Activated CD4-positive, alpha-beta T cell treated with anti-CD3 and anti-CD28 coated beads for 36 hours (primary cell): ENCODE measurements at regions of chr7 and their contacts with region 1.

Region 1: GRCh38 chr7:44885394-44886317 is at the start of gene PURB:
- DNase-seq: peak; percentile 98
- ATAC-seq: peak; percentile 97
- H3K4me3 Mint-ChIP-seq: peak within 1 kb of the TSS; percentile 86
- H3K27ac Mint-ChIP-seq: peak within 1 kb of the TSS; percentile 98
- H3K4me1 Mint-ChIP-seq: peaks cover 51% of the 10 kb centered on the region
- H3K27me3 Mint-ChIP-seq: no peaks in the 10 kb centered on the region
- total RNA-seq, gene PURB: 18.8 to 20.8 TPM

Region 2: GRCh38 chr7:44581879-44582603 is 303.6 kb before region 1 on chr7 and contains the start of gene TMED4:
- CTCF ChIA-PET with region 1: no interaction called
- POLR2A ChIA-PET with region 1: interaction called, 5 read pairs
- intact Hi-C with region 1: loop called in 1 of 2 experiments (anchors 1 kb)
- DNase-seq: peak; percentile 100
- ATAC-seq: peak; percentile 95
- H3K4me3 Mint-ChIP-seq: peak within 1 kb of the TSS; percentile 85
- H3K27ac Mint-ChIP-seq: peak within 1 kb of the TSS; percentile 92
- H3K4me1 Mint-ChIP-seq: peaks cover 33% of the 10 kb centered on the region
- H3K27me3 Mint-ChIP-seq: no peaks in the 10 kb centered on the region
- total RNA-seq, gene TMED4: 71.6 to 73.0 TPM

Region 3: DNA sequence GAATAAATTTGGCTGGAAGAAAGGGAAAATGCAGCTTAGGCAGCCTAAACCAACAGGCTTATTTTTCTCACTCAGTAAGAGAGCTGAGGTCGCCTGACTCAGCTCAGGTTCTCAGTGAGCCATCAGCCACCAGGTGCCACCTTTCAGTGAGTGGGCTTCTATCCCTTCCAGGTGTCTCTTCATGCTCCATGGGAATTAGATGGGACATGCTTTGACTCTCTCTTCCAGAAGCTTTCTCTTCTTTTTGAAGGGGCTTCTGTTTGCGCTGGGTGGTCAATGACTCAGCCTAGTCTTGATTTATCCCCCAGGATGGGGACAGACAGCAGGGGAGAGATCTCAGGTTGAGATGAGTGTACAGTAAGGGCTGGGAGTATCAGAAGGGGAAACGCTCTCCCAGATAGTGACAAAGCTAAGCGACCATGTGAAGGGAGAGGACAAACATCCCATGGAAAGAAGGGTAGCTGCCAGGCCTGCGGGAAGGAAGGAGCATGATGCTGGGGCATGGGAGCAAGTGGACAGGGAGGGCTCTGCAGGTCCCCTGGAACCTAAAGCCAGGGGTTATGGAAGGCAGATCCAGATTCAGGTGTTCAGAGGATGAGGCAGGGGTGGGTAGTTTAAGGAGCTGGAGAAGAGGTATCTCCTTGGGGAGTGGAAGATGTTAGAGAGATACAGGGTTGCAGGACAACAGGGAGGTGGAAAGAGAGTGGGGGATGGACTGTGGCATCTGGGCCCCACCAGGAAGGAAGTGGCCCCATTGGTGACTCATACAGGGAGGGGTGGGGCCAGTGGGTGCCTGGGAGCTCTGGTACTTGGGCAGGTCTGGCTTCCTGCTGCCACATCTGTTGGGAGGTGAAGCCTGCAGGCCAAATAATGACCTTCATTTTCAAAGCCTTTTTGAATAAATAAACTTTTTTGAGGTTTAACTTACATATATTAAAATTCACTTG is 246.8 kb before region 1 on chr7:
- CTCF ChIA-PET with region 1: no interaction called
- POLR2A ChIA-PET with region 1: no interaction called
- intact Hi-C with region 1: loop called in 1 of 2 experiments (anchors 1 kb)
- DNase-seq: peak; percentile 90
- ATAC-seq: peak; percentile 71
- H3K4me3 Mint-ChIP-seq: peak overlapping the region; percentile 73
- H3K27ac Mint-ChIP-seq: peak overlapping the region; percentile 100
- H3K4me1 Mint-ChIP-seq: peaks cover 75% of the 10 kb centered on the region
- H3K27me3 Mint-ChIP-seq: no peaks in the 10 kb centered on the region

Region 4: GRCh38 chr7:44858161-44858560 is 27.5 kb before region 1 on chr7:
- CTCF ChIA-PET with region 1: interaction called, 38 read pairs
- POLR2A ChIA-PET with region 1: interaction called, 11 read pairs
- intact Hi-C with region 1: loop called (anchors 1 to 2 kb)
- DNase-seq: no peak
- ATAC-seq: no peak
- H3K4me3 Mint-ChIP-seq: no peak overlapping the region
- H3K27ac Mint-ChIP-seq: no peak overlapping the region
- H3K4me1 Mint-ChIP-seq: peaks cover 18% of the 10 kb centered on the region
- H3K27me3 Mint-ChIP-seq: no peaks in the 10 kb centered on the region

Region 5: GRCh38 chr7:44921607-44922359 is 36.1 kb after region 1 on chr7:
- CTCF ChIA-PET with region 1: interaction called, 20 read pairs
- POLR2A ChIA-PET with region 1: no interaction called
- intact Hi-C with region 1: loop called (anchors 1 kb)
- DNase-seq: peak; percentile 99
- ATAC-seq: peak; percentile 99
- H3K4me3 Mint-ChIP-seq: no peak overlapping the region
- H3K27ac Mint-ChIP-seq: peak overlapping the region; percentile 47
- H3K4me1 Mint-ChIP-seq: peaks cover 15% of the 10 kb centered on the region
- H3K27me3 Mint-ChIP-seq: peaks cover under 1% of the 10 kb centered on the region

Region 6: DNA sequence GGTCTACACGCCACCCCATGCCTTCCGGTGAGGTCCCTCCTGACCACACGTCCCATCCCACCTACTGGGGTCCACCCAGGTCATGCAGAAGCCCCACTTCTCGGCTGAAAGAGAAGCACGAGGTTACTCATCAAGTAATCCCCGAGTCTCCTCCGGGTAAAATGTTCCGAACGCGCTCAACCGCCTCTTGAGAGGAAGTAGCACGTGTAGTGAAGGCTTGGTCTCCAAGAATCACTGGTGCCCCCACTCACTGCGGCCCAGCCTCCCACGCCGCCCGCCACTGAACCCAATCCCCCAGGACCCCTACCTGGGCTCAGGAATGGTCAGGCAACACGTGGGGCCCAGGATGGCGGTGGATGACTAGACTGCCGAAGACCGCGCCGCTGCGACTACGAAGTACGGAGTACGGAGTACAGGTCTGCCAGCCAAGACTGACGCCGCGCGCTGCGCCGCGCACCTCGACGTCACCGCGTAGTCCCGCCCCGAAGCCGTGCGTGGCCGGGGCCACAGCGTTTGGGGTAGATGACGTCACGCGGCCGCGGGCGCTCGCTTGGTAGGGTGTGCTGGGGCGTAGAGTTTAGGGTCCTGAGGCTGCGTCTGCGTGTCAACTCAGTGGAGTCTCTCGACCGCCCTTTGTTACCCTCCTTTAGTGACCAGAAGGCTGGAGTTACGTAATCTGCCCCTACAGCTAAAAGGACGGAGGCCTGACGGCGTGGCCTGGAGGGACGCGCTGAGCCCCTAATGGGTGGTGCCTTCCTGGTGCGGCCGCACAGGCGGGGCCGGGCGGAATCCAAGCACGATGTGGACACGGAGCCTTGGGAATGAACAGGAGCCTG is 100.8 kb after region 1 on chr7:
- CTCF ChIA-PET with region 1: no interaction called
- POLR2A ChIA-PET with region 1: no interaction called
- intact Hi-C with region 1: loop called in 1 of 2 experiments (anchors 1 kb)
- DNase-seq: peak; percentile 99
- ATAC-seq: peak; percentile 90
- H3K4me3 Mint-ChIP-seq: peak overlapping the region; percentile 99
- H3K27ac Mint-ChIP-seq: peak overlapping the region; percentile 99
- H3K4me1 Mint-ChIP-seq: peaks cover 52% of the 10 kb centered on the region
- H3K27me3 Mint-ChIP-seq: no peaks in the 10 kb centered on the region

Region 7: DNA sequence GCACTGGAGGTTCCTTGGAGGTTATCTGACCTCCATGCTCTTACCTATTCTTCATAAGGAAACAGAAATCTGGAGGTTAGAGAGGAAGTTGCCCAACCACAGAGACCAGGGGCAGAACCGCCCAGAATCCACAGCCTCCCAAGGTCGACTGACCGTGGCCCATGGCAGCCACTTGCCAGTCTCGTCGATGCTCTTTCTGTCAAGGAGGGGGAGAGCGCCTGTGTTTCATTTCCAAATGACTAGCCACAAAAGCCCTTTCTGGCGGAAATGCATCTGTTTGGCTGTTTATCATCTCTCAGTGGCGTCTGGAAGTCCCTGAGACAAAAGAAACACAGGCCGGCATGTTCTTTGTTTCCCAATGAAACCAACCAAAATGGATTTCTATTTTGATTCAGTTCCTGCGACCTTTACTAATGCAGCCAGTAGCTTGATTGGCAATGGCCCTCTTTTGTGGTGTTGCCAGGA is 274.8 kb after region 1 on chr7:
- CTCF ChIA-PET with region 1: no interaction called
- POLR2A ChIA-PET with region 1: no interaction called
- intact Hi-C with region 1: no loop called
- DNase-seq: no peak
- ATAC-seq: peak; percentile 16
- H3K4me3 Mint-ChIP-seq: no peak overlapping the region
- H3K27ac Mint-ChIP-seq: no peak overlapping the region
- H3K4me1 Mint-ChIP-seq: no peaks in the 10 kb centered on the region
- H3K27me3 Mint-ChIP-seq: peaks cover 16% of the 10 kb centered on the region

Region 8: GRCh38 chr7:45944058-45944457 is 1058.4 kb after region 1 on chr7:
- CTCF ChIA-PET with region 1: no interaction called
- POLR2A ChIA-PET with region 1: no interaction called
- intact Hi-C with region 1: no loop called
- DNase-seq: no peak
- ATAC-seq: no peak
- H3K4me3 Mint-ChIP-seq: no peak overlapping the region
- H3K27ac Mint-ChIP-seq: no peak overlapping the region
- H3K4me1 Mint-ChIP-seq: peaks cover 20% of the 10 kb centered on the region
- H3K27me3 Mint-ChIP-seq: no peaks in the 10 kb centered on the region